Caco-2 (cell line): ENCODE measurements at regions of chr5 and their contacts with region 1.

Region 1: GRCh38 chr5:172188033-172188892 is at the start of gene STK10:
- DNase-seq: peak; percentile 88 to 92
- H3K4me3 ChIP-seq: peak within 1 kb of the TSS; percentile 91
- H3K4me3 Mint-ChIP-seq: peak within 1 kb of the TSS; percentile 98
- H3K27ac Mint-ChIP-seq: peak within 1 kb of the TSS; percentile 36
- H3K4me1 ChIP-seq: peaks cover 8% of the 10 kb centered on the region; the same call in 1 of the 2 replicates
- H3K4me1 Mint-ChIP-seq: no peaks in the 10 kb centered on the region
- H3K27me3 ChIP-seq: no peaks in the 10 kb centered on the region
- H3K27me3 Mint-ChIP-seq: peaks cover 3% of the 10 kb centered on the region
- CTCF ChIP-seq: peak; percentile 82 to 92
- total RNA-seq, gene STK10: 10.3 and 15.6 TPM in 2 replicates

Region 2: GRCh38 chr5:171913987-171914273 is 274.3 kb before region 1 on chr5:
- CTCF ChIA-PET with region 1: interaction called, 3 read pairs
- POLR2A ChIA-PET with region 1: no interaction called
- intact Hi-C with region 1: loop called (anchors 5 kb)
- DNase-seq: no peak
- H3K4me3 ChIP-seq: no peak overlapping the region
- H3K4me3 Mint-ChIP-seq: no peak overlapping the region
- H3K27ac Mint-ChIP-seq: no peak overlapping the region
- H3K4me1 ChIP-seq: no peaks in the 10 kb centered on the region
- H3K4me1 Mint-ChIP-seq: peaks cover 4% of the 10 kb centered on the region
- H3K27me3 ChIP-seq: no peaks in the 10 kb centered on the region
- H3K27me3 Mint-ChIP-seq: no peaks in the 10 kb centered on the region
- CTCF ChIP-seq: no peak

Region 3: DNA sequence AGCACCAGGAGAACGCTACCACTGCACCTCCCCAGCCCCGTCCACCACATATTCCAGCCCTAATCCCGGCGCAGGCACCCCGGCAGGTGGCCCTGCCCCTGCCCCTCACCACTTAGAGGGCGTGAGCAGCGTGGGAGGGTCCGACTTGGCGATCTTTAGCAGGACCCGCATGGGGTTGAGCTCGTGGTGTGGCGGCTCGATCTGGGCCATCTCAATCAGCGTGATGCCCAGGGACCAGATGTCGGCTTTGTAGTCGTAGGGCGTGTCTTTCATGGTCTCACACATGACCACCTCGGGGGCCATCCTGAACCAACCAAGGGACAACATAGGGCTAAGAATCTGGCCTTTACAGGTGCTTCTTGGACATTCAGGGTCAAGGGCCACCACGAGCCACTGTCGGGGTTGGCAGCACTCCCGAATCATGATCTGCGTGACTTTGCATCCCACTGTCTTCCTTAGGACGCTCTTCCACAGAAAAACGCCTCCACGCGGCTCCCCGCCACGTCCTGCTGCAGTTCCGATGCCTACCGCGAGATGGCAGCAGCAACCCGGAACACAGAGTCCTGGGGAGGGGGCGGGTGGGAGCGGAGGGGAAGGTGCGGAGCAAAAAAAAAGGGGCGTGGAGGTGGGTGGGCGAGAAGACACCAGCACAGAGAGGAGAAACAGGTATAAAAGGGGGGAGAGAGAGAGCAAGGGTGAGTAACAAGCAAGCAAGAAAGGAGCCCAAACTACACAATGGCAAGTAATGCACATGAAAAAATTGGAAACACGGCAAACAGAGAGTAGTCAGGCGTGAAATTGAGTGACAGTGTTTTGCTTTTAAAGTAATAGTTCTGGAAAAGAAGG is 81.5 kb before region 1 on chr5:
- CTCF ChIA-PET with region 1: interaction called, 8 read pairs
- POLR2A ChIA-PET with region 1: no interaction called
- intact Hi-C with region 1: loop called (anchors 1 kb)
- DNase-seq: peak; percentile 61 to 83
- H3K4me3 ChIP-seq: peak overlapping the region; percentile 2; the same call in 1 of the 2 replicates
- H3K4me3 Mint-ChIP-seq: peak overlapping the region; percentile 64
- H3K27ac Mint-ChIP-seq: peak overlapping the region; percentile 39
- H3K4me1 ChIP-seq: peaks cover 16% of the 10 kb centered on the region; the same call in 1 of the 2 replicates
- H3K4me1 Mint-ChIP-seq: peaks cover 7% of the 10 kb centered on the region
- H3K27me3 ChIP-seq: no peaks in the 10 kb centered on the region
- H3K27me3 Mint-ChIP-seq: no peaks in the 10 kb centered on the region
- CTCF ChIP-seq: peak; percentile 96 to 99

Region 4: GRCh38 chr5:172144291-172144815 is 43.9 kb before region 1 on chr5:
- CTCF ChIA-PET with region 1: interaction called, 3 read pairs
- POLR2A ChIA-PET with region 1: interaction called, 3 read pairs
- intact Hi-C with region 1: loop called (anchors 5 kb)
- DNase-seq: peak; percentile 47 to 75
- H3K4me3 ChIP-seq: no peak overlapping the region
- H3K4me3 Mint-ChIP-seq: no peak overlapping the region
- H3K27ac Mint-ChIP-seq: peak overlapping the region; percentile 88
- H3K4me1 ChIP-seq: peaks cover 57% of the 10 kb centered on the region
- H3K4me1 Mint-ChIP-seq: peaks cover 66% of the 10 kb centered on the region
- H3K27me3 ChIP-seq: no peaks in the 10 kb centered on the region
- H3K27me3 Mint-ChIP-seq: no peaks in the 10 kb centered on the region
- CTCF ChIP-seq: no peak

Region 5: GRCh38 chr5:172162323-172162986 is 25.8 kb before region 1 on chr5:
- CTCF ChIA-PET with region 1: interaction called, 4 read pairs
- POLR2A ChIA-PET with region 1: no interaction called
- intact Hi-C with region 1: loop called (anchors 1 kb)
- DNase-seq: peak in 1 of 2 experiments; percentile 37
- H3K4me3 ChIP-seq: no peak overlapping the region
- H3K4me3 Mint-ChIP-seq: no peak overlapping the region
- H3K27ac Mint-ChIP-seq: no peak overlapping the region
- H3K4me1 ChIP-seq: 0 out of 2 replicates have a peak, but pooled peaks cover 4% of the 10 kb centered on the region
- H3K4me1 Mint-ChIP-seq: peaks cover 6% of the 10 kb centered on the region
- H3K27me3 ChIP-seq: no peaks in the 10 kb centered on the region
- H3K27me3 Mint-ChIP-seq: no peaks in the 10 kb centered on the region
- CTCF ChIP-seq: peak in 1 of 2 experiments; percentile 23

Region 6: DNA sequence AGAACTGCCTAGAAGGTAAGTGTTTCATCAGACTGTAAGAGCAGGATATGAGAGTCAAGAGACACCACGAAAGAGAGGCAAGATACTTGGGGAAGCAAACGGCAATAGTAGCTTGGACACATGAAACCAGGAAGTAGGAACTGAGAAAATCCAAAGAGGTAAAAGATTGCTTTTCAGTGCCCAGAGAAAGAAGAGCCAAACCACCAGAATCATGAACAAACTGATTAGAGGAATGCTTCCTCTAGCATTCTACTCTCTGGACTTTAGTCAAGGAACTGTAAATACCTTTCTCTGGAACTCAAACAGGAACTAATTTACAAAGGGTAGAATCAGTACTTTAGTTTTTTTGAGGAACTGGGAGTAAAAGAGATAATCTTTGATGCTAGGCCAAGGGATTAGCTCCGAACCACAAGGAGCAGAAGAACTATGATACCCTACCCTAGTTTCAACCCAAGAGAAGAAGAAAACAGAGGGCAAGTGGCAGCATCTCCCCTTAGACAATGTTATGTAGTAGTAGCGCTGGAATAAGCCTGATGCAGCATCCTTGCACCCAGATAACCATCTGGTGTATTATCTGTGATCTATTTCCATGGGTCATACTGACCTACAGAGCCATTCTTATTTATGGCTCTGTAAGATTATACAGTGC is 47.0 kb after region 1 on chr5:
- CTCF ChIA-PET with region 1: no interaction called
- POLR2A ChIA-PET with region 1: no interaction called
- intact Hi-C with region 1: loop called (anchors 1 kb)
- DNase-seq: peak in 1 of 2 experiments; percentile 48
- H3K4me3 ChIP-seq: no peak overlapping the region
- H3K4me3 Mint-ChIP-seq: peak overlapping the region; percentile 55
- H3K27ac Mint-ChIP-seq: peak overlapping the region; percentile 70
- H3K4me1 ChIP-seq: peaks cover 52% of the 10 kb centered on the region
- H3K4me1 Mint-ChIP-seq: peaks cover 47% of the 10 kb centered on the region
- H3K27me3 ChIP-seq: no peaks in the 10 kb centered on the region
- H3K27me3 Mint-ChIP-seq: no peaks in the 10 kb centered on the region
- CTCF ChIP-seq: no peak

Region 7: DNA sequence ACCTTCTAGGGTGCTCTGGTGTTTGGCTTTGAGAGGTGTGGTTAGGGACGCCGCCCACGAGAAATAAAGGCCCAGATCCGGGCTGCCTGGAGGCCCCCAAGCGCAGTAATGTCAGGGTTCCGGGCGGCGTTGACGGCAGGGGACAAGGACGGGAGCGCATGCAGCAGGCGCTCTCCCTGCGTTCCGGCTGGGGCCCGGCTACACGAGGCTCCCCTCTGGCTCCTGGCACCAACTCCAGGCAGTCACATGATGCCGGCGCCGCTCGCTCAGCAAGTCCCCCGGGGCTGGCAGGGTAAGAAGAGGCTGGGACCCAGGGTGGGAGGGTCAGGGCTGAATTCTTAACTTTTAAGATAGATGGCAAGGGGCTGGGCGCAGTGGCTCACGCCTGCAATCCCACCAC is 67.2 kb after region 1 on chr5:
- CTCF ChIA-PET with region 1: no interaction called
- POLR2A ChIA-PET with region 1: no interaction called
- intact Hi-C with region 1: no loop called
- DNase-seq: no peak
- H3K4me3 ChIP-seq: no peak overlapping the region
- H3K4me3 Mint-ChIP-seq: no peak overlapping the region
- H3K27ac Mint-ChIP-seq: no peak overlapping the region
- H3K4me1 ChIP-seq: no peaks in the 10 kb centered on the region
- H3K4me1 Mint-ChIP-seq: peaks cover 5% of the 10 kb centered on the region
- H3K27me3 ChIP-seq: no peaks in the 10 kb centered on the region
- H3K27me3 Mint-ChIP-seq: no peaks in the 10 kb centered on the region
- CTCF ChIP-seq: no peak

Region 8: GRCh38 chr5:172283020-172283861 is 95.0 kb after region 1 on chr5 and contains the start of gene UBTD2:
- CTCF ChIA-PET with region 1: no interaction called
- POLR2A ChIA-PET with region 1: interaction called, 3 read pairs
- intact Hi-C with region 1: loop called (anchors 1 kb)
- DNase-seq: peak; percentile 84 to 90
- H3K4me3 ChIP-seq: peak within 1 kb of the TSS; percentile 84
- H3K4me3 Mint-ChIP-seq: peak within 1 kb of the TSS; percentile 86
- H3K27ac Mint-ChIP-seq: peak within 1 kb of the TSS; percentile 85
- H3K4me1 ChIP-seq: peaks cover 5% of the 10 kb centered on the region; the same call in 1 of the 2 replicates
- H3K4me1 Mint-ChIP-seq: peaks cover 9% of the 10 kb centered on the region
- H3K27me3 ChIP-seq: no peaks in the 10 kb centered on the region
- H3K27me3 Mint-ChIP-seq: no peaks in the 10 kb centered on the region
- CTCF ChIP-seq: peak; percentile 42 to 78
- total RNA-seq, gene UBTD2: 32.4 and 33.2 TPM in 2 replicates